GM10248 (cell line): ENCODE measurements at regions of chr1 and their contacts with region 1.

Region 1: DNA sequence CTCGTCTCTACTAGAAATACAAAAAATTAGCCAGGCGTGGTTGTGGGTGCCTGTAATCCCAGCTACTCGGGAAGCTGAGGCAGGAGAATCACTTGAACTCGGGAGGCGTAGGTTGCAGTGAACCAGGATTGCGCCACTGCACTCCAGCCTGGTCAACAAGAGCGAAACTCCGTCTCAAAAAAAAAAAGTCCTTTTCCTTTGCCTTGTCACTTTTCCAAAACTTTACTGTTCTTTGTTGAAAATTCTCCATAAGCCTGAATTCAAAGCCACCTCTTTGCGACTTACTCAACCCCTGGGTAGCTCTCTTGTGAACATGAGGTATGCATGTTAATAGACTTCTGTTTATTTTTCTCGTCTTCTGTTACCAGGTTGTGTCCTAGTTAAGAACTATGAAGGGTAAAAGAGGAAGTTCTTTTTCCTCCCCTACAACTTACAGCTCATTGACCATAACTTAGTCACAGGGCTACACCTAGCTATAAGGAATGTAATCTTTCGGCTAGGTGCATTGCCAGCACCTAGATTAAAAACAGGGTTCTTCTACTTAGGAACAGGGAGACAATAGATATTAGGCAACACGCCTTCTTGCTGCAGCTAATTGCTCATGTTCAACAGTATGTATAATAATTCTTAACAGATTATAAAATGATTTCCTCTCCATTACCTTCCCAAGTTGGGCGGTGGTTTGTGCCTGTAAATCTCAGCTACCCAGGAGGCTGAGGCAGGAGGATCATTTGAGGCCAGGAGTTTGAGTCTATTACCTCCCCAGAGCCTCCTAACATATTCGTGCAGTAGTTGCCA is 40.9 kb downstream of the PTAFR start:
- DNase-seq: no peak
- CTCF ChIP-seq: no peak

Region 2: GRCh38 chr1:28147264-28148094 is 11.9 kb after region 1 on chr1:
- CTCF ChIA-PET with region 1: interaction called, 16 read pairs
- POLR2A ChIA-PET with region 1: no interaction called
- DNase-seq: no peak
- CTCF ChIP-seq: no peak